ENCODE measurements at regions of chr16 and their contacts with region 1.

Region 1: DNA sequence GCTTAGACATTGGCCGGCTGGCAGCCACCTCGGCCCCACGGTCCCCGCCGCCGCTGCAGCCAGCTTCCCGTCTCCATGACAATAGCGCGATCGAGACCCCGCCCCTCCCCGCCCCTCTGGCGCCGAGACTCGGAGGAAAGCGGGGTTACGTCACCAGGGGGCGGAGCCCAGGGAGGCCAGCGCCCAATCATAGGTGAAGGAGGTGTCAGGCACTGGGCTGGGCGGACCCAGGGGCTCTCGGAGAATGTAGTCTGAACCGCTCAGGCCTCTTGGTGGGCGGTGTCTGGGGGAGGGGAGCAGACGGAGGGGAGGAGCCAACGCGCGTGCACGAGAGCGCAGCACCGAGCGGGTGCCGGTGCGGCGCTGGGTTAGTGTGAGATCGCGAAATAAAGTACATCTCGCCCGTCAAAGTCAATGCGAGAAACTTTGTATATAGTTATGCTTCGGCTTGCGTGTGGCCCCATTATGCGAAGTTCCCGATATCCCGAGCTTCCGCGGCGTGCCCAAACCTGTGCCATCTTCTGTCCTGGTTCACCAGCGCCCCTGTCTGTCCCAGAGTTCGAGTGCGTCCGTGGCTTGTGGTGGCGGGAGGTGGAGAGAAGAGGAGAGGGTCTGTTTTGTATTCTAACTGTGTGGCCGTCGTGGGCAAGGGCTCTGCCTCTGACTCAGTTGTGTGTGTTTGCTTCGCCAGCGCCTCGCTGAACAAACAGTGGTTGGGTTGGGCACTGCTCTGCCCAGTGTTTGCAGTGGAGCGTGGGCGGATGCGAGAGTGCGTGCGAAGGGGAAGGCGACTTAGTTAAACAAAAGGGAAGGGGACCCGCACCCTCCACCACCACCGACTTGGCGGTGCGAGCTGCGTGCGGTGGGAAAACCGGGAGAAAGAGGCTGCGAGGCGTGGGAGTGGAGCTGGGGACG is 1.3 kb upstream of the IRX5 start:
- DNase-seq: peak; percentile 99
- ATAC-seq: peak; percentile 96
- H3K4me3 Mint-ChIP-seq: peak overlapping the region; percentile 72
- H3K27ac Mint-ChIP-seq: peak overlapping the region; percentile 62
- H3K4me1 Mint-ChIP-seq: peaks cover 32% of the 10 kb centered on the region
- H3K27me3 Mint-ChIP-seq: peaks cover 57% of the 10 kb centered on the region

Region 2: DNA sequence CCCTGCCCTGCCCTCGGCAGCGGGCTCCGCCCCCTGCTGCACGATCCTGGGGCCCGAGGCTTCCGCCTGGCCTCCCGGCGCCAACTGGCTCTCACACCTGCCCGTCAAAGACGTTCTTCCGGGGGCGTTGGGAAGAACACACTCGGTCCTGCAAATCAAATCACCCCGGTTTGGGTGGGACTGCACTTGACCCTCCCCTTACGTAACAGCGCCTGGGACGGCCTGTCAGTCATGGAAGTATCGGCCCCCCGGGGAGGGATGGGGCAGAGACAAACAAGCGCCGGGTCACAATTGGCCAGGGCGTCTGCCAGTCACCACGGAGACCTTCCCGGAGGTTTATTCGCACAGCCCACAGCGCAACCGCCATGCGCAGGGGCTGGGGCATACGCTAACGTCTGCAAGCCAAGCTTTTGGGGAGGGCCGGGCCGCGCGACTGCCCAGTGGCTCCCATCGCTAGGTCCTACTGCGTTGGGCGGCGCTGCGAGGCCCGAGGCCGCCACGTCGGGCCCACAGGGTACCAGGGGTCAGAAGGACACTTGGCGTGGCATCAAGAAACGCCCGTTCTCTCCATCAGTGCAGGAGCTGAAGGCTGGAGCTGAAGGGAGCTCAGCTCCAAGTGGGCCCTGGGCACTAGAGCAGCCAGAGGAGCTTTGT is 1426.0 kb before region 1 on chr16:
- CTCF ChIA-PET with region 1: no interaction called
- POLR2A ChIA-PET with region 1: no interaction called
- intact Hi-C with region 1: loop called in 1 of 2 experiments (anchors 1 kb)
- DNase-seq: peak; percentile 100
- ATAC-seq: peak; percentile 92
- H3K4me3 Mint-ChIP-seq: peak overlapping the region; percentile 94
- H3K27ac Mint-ChIP-seq: peak overlapping the region; percentile 96
- H3K4me1 Mint-ChIP-seq: peaks cover 60% of the 10 kb centered on the region
- H3K27me3 Mint-ChIP-seq: no peaks in the 10 kb centered on the region

Region 3: DNA sequence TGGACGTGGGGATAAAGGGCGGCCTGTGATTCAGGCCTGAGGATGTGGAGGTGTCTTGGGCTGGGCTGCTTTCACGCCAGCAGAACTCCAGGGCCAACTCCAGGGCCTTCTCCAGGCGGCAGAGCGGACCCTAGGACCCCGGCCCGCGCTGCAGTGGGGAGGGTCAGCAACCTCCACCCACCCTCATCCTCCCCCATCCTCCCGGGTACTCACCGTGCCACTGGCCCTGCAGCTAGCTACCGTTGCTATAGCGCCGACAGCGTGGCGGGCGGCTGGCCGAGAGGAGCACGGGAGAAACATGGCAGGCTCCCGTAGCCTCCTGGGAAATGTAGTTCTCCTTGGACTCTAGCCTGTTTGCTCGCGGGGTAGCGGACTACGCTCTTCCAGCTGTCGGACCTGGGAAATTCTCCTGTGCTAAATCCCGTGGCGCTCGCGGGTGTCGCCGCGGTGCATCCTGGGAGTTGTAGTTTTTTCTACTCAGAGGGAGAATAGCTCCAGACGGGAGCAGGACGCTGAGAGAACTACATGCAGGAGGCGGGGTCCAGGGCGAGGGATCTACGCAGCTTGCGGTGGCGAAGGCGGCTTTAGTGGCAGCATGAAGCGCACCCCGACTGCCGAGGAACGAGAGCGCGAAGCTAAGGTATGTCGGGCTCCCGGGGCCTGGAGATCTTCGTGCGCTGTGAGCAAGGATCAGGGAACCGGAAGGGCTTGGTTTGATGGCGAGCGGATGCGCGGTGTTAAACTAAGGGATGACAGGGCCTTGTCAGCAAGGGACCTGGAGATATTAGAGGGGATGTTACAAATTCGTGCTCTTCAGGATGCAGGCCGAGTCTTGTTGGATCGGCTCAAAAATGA is 1225.5 kb before region 1 on chr16 and contains the starts of genes FTO and RPGRIP1L:
- CTCF ChIA-PET with region 1: no interaction called
- POLR2A ChIA-PET with region 1: no interaction called
- intact Hi-C with region 1: loop called in 1 of 2 experiments (anchors 1 kb)
- DNase-seq: peak; percentile 99
- ATAC-seq: peak; percentile 98
- H3K4me3 Mint-ChIP-seq: peak within 1 kb of the TSS; percentile 96
- H3K27ac Mint-ChIP-seq: peak within 1 kb of the TSS; percentile 97
- H3K4me1 Mint-ChIP-seq: peaks cover 35% of the 10 kb centered on the region
- H3K27me3 Mint-ChIP-seq: no peaks in the 10 kb centered on the region
- total RNA-seq, gene FTO: 50.9 to 57.6 TPM
- total RNA-seq, gene RPGRIP1L: 7.8 to 10.2 TPM

Region 4: DNA sequence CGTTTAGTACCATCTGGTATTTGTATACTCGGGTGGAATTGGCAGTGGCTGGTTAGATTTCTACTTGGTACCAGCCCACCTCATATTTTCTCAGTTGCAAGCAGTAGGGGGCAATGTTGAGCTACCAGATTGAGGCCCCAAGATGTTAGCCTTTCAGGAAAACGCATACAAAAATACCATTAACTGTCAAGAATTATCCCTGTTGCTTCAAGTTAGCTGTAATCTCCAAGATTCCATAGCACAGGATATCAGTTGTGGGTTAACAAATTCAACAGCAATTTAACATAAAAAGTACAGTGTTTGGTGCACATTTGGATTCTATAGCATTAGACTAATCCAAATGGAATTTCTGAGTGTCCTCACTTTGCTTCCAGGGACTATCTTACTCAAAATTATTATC is 1037.2 kb before region 1 on chr16:
- CTCF ChIA-PET with region 1: no interaction called
- POLR2A ChIA-PET with region 1: no interaction called
- intact Hi-C with region 1: loop called in 1 of 2 experiments (anchors 10 kb)
- DNase-seq: peak; percentile 69
- ATAC-seq: peak; percentile 71
- H3K4me3 Mint-ChIP-seq: no peak overlapping the region
- H3K27ac Mint-ChIP-seq: no peak overlapping the region
- H3K4me1 Mint-ChIP-seq: peaks cover 5% of the 10 kb centered on the region
- H3K27me3 Mint-ChIP-seq: no peaks in the 10 kb centered on the region

Region 5: DNA sequence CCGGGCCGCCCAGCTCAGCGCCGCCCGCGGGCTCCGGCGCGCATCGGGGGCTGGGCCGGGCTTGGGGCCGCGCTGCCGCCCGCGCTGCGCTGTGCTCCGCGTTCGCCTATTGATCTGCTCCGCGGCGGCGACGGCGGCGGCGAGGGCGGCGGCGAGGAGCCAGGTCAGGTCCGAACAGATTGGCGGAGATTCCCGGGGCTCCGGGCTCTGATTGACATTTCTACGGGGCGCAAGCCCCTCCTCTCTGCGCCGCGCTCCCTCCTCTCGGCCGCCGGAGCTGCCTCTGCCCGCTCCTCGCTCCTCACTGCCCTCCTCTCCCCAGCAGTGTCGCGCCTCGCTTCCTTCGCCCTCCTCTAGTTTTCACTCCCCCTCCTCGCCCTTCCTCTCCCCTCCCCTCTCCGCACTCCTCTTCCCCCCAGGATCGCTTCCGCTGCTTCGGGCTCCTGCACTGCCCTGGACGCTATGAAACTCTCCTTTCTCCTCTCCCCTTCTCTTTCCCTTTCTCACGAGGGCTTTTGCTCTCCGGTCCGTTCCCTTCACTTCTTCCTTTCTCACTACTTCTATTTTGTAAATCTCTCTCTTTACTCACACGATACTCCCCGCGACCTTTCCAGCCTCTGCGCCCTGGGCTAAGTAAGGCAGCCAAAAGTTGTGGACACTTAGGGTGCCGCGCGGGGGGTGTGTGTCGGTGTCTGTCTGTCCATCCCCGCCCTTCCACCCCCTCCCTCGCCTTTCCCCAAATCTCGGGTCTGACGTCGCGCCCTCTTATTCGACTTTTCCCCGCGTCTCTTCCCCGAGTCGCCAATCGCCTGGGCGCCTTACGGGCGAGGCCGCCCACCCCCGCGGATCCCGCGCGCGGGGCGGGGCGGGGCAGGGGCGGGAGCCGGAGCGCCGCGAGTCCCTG is 643.0 kb before region 1 on chr16 and contains the start of gene IRX3:
- CTCF ChIA-PET with region 1: no interaction called
- POLR2A ChIA-PET with region 1: no interaction called
- intact Hi-C with region 1: loop called in 1 of 2 experiments (anchors 2 kb)
- DNase-seq: peak; percentile 38
- ATAC-seq: peak; percentile 27
- H3K4me3 Mint-ChIP-seq: peak within 1 kb of the TSS; percentile 62
- H3K27ac Mint-ChIP-seq: no peak within 1 kb of the TSS
- H3K4me1 Mint-ChIP-seq: peaks cover 35% of the 10 kb centered on the region
- H3K27me3 Mint-ChIP-seq: peaks cover 54% of the 10 kb centered on the region
- total RNA-seq, gene IRX3: not detected

Region 6: DNA sequence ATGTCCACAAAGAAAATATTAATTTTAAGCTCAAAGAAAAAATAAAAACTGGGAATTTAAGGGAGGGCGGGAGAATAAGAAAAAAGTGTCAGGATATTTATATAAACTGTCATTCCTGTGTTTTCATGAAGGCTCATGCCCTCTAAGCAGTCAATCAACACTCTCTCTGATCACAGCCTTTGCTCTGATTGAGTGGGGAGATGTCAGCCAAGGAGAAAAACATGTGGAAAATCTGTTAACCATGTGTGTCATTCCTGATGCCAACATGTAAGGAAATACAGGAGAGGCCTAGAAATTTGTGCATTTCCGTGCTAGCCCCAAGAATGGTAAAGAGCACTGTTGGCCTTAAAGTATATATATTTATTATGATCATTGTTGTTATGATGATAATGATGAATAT is 136.5 kb before region 1 on chr16:
- CTCF ChIA-PET with region 1: no interaction called
- POLR2A ChIA-PET with region 1: no interaction called
- intact Hi-C with region 1: no loop called
- DNase-seq: no peak
- ATAC-seq: no peak
- H3K4me3 Mint-ChIP-seq: no peak overlapping the region
- H3K27ac Mint-ChIP-seq: no peak overlapping the region
- H3K4me1 Mint-ChIP-seq: no peaks in the 10 kb centered on the region
- H3K27me3 Mint-ChIP-seq: peaks cover 2% of the 10 kb centered on the region

Region 7: DNA sequence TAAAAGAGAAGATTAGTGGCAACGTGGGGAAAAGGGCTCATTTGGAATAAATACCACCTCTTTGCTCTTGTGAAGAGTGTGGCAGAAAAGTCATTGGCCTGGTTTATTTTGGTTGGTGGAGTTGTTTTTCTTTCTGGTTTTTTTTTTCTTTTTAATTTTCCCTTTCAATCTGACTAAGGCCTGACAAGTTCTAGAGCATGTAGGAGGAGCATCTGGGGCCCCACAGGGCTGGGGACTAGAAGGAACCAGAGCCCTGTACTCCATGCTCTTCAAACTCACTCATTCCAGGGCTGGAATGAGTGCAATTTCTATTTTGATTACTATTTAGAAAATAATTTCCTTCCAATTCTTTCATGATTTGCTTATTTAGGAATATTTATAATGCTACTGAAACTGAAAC is 14.7 kb after region 1 on chr16:
- CTCF ChIA-PET with region 1: no interaction called
- POLR2A ChIA-PET with region 1: no interaction called
- intact Hi-C with region 1: no loop called
- DNase-seq: peak; percentile 25
- ATAC-seq: peak; percentile 76
- H3K4me3 Mint-ChIP-seq: no peak overlapping the region
- H3K27ac Mint-ChIP-seq: no peak overlapping the region
- H3K4me1 Mint-ChIP-seq: peaks cover 4% of the 10 kb centered on the region
- H3K27me3 Mint-ChIP-seq: peaks cover 64% of the 10 kb centered on the region

Measured in activated CD4-positive, alpha-beta T cell treated with anti-CD3 and anti-CD28 coated beads for 36 hours (primary cell).